T-cell (primary cell): ENCODE measurements at regions of chr1 and their contacts with region 1.

Region 1: GRCh38 chr1:110619412-110620249 is 13.5 kb upstream of the KCNA2 start:
- DNase-seq: peak; percentile 74 to 95 (median 86)
- ATAC-seq: peak; percentile 85 to 90 (median 86)
- H3K4me3 ChIP-seq: peak overlapping the region; percentile 67 to 73
- H3K4me3 Mint-ChIP-seq: peak overlapping the region; percentile 83 to 87 (median 86)
- H3K27ac ChIP-seq: peak overlapping the region; percentile 79
- H3K27ac Mint-ChIP-seq: peak overlapping the region; percentile 88 to 92
- H3K4me1 ChIP-seq: peaks cover 17 to 36% of the 10 kb centered on the region in 2 experiments
- H3K4me1 Mint-ChIP-seq: peaks cover 31 to 45% (median 41%) of the 10 kb centered on the region in 3 donors
- H3K27me3 ChIP-seq: no peaks in the 10 kb centered on the region
- H3K27me3 Mint-ChIP-seq: no peaks in the 10 kb centered on the region

Region 2: DNA sequence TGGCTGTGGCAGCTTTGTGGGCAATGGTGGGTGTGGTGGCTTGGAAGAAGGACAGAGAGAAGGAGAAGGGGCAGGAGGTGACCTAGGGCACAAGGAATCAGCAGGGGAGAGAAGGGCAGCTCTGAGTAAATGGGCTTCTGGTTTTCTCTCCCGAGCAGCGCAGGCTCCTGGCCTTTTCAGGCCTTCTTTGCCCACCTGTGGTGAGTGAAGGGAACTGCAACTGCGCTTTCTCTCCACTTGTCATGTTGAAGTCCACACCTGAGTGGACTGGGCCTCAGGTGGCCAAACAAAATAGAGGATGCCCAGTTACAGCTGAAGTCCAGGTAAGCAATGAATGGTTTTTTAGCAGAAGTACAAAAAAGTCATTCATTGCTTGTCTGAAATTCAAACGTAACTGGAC is 71.2 kb before region 1 on chr1:
- CTCF ChIA-PET with region 1: no interaction called
- POLR2A ChIA-PET with region 1: no interaction called
- DNase-seq: no peak
- ATAC-seq: no peak
- H3K4me3 ChIP-seq: no peak overlapping the region
- H3K4me3 Mint-ChIP-seq: no peak overlapping the region
- H3K27ac ChIP-seq: no peak overlapping the region
- H3K27ac Mint-ChIP-seq: no peak overlapping the region
- H3K4me1 ChIP-seq: no peaks in the 10 kb centered on the region
- H3K4me1 Mint-ChIP-seq: no peaks in the 10 kb centered on the region
- H3K27me3 ChIP-seq: peaks cover 0 to 18% of the 10 kb centered on the region in 2 experiments
- H3K27me3 Mint-ChIP-seq: peaks cover 32 to 45% of the 10 kb centered on the region in 2 donors

Region 3: DNA sequence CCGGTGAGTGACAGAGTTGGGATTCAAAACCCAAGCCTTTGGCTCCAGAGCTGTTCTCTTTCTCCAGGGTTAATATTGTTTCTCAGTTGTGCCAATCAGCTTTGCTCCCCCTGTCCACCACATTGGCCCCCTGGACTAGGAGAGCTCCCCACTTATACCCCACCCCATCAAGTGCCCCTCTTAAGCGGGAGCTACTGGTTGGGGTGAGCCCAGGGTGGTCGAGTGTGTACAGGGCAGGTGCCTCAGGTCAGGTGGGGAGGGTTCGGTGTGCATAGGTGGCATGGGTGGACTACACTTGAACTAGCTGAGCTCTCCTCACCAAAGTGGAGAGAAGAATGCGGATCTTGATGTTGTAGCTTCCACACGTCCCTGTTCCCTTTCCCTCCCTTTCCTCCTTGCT is 27.7 kb before region 1 on chr1:
- CTCF ChIA-PET with region 1: no interaction called
- POLR2A ChIA-PET with region 1: no interaction called
- DNase-seq: no peak
- ATAC-seq: no peak
- H3K4me3 ChIP-seq: no peak overlapping the region
- H3K4me3 Mint-ChIP-seq: no peak overlapping the region
- H3K27ac ChIP-seq: no peak overlapping the region
- H3K27ac Mint-ChIP-seq: no peak overlapping the region
- H3K4me1 ChIP-seq: no peaks in the 10 kb centered on the region
- H3K4me1 Mint-ChIP-seq: peaks cover 0 to 7% (median 4%) of the 10 kb centered on the region in 3 donors
- H3K27me3 ChIP-seq: peaks cover 3 to 25% of the 10 kb centered on the region in 2 experiments
- H3K27me3 Mint-ChIP-seq: peaks cover 12 to 18% of the 10 kb centered on the region in 2 donors

Region 4: GRCh38 chr1:110630839-110631663 is 11.4 kb after region 1 on chr1:
- CTCF ChIA-PET with region 1: interaction called, 6 to 11 read pairs
- POLR2A ChIA-PET with region 1: no interaction called
- DNase-seq: peak; percentile 63 to 93 (median 79)
- ATAC-seq: peak; percentile 78 to 84 (median 80)
- H3K4me3 ChIP-seq: peak overlapping the region; percentile 19 to 36
- H3K4me3 Mint-ChIP-seq: no peak overlapping the region
- H3K27ac ChIP-seq: peak overlapping the region; percentile 88
- H3K27ac Mint-ChIP-seq: no peak overlapping the region
- H3K4me1 ChIP-seq: peaks cover 38 to 66% of the 10 kb centered on the region in 2 experiments
- H3K4me1 Mint-ChIP-seq: peaks cover 42 to 62% (median 53%) of the 10 kb centered on the region in 3 donors
- H3K27me3 ChIP-seq: no peaks in the 10 kb centered on the region
- H3K27me3 Mint-ChIP-seq: no peaks in the 10 kb centered on the region

Region 5: DNA sequence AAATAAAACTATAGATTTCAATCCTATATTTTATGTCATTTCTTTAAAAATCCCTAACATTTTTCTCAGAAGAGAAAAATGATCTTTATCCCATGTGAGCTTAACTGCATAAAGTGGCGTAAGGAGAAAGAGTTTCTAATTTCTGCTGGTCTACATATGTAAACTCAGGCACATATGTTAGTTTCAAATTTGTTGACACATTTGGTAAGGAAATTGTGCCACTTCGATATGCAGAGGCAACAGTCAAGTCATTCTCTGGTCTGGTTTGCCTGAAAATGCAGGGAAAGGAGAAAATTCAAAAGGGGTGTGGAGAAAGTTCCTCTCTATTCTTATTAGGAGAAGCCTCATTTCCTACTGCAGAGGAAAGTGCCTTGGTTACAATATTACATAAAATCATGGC is 43.6 kb after region 1 on chr1:
- CTCF ChIA-PET with region 1: interaction called in 1 of 2 experiments, 13 read pairs
- POLR2A ChIA-PET with region 1: no interaction called
- DNase-seq: no peak
- ATAC-seq: no peak
- H3K4me3 ChIP-seq: no peak overlapping the region
- H3K4me3 Mint-ChIP-seq: no peak overlapping the region
- H3K27ac ChIP-seq: no peak overlapping the region
- H3K27ac Mint-ChIP-seq: peak overlapping the region; percentile 32 to 50
- H3K4me1 ChIP-seq: peaks cover 7 to 14% of the 10 kb centered on the region in 2 experiments
- H3K4me1 Mint-ChIP-seq: peaks cover 6 to 34% (median 32%) of the 10 kb centered on the region in 3 donors
- H3K27me3 ChIP-seq: no peaks in the 10 kb centered on the region
- H3K27me3 Mint-ChIP-seq: no peaks in the 10 kb centered on the region

Region 6: GRCh38 chr1:110674337-110675059 is 54.9 kb after region 1 on chr1 and contains the start of gene KCNA3:
- CTCF ChIA-PET with region 1: interaction called, 7 to 12 read pairs
- POLR2A ChIA-PET with region 1: no interaction called
- DNase-seq: peak; percentile 35 to 79 (median 58)
- ATAC-seq: peak; percentile 35 to 59 (median 54)
- H3K4me3 ChIP-seq: peak within 1 kb of the TSS; percentile 78 to 99
- H3K4me3 Mint-ChIP-seq: peak within 1 kb of the TSS; percentile 93 to 100 (median 96)
- H3K27ac ChIP-seq: peak within 1 kb of the TSS; percentile 96
- H3K27ac Mint-ChIP-seq: peak within 1 kb of the TSS; percentile 94 to 100
- H3K4me1 ChIP-seq: peaks cover 6 to 28% of the 10 kb centered on the region in 2 experiments
- H3K4me1 Mint-ChIP-seq: peaks cover 37 to 61% (median 54%) of the 10 kb centered on the region in 3 donors
- H3K27me3 ChIP-seq: no peaks in the 10 kb centered on the region
- H3K27me3 Mint-ChIP-seq: no peaks in the 10 kb centered on the region
- total RNA-seq, gene KCNA3: 101 to 125 (median 110) TPM

Region 7: DNA sequence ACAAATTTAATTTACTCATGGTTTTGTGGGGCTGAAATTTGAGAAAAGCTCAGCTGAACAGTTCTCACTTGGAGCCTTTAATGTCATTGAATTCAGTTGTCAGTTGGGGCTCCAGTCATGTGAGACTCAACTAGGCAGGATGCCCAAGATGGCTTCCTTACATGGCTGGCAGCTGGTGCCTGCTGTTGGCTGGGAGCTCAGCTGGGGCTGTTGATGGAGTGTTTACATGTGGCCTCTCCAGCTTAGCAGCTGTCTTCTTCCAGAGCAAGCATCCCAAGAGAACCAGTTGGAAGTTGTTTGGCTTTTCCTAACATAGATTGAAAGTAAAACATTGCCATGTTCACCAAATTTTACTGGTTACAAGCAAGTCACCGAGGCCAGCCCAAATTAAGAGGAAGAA is 136.9 kb after region 1 on chr1:
- CTCF ChIA-PET with region 1: interaction called, 3 to 10 read pairs
- POLR2A ChIA-PET with region 1: no interaction called
- DNase-seq: no peak
- ATAC-seq: no peak
- H3K4me3 ChIP-seq: no peak overlapping the region
- H3K4me3 Mint-ChIP-seq: no peak overlapping the region
- H3K27ac ChIP-seq: no peak overlapping the region
- H3K27ac Mint-ChIP-seq: no peak overlapping the region
- H3K4me1 ChIP-seq: no peaks in the 10 kb centered on the region
- H3K4me1 Mint-ChIP-seq: no peaks in the 10 kb centered on the region
- H3K27me3 ChIP-seq: peaks cover 2 to 3% of the 10 kb centered on the region in 2 experiments
- H3K27me3 Mint-ChIP-seq: peaks cover 20 to 24% of the 10 kb centered on the region in 2 donors

Region 8: GRCh38 chr1:110780600-110781484 is 161.2 kb after region 1 on chr1:
- CTCF ChIA-PET with region 1: interaction called, 10 to 75 read pairs
- POLR2A ChIA-PET with region 1: no interaction called
- DNase-seq: peak; percentile 47 to 91 (median 67)
- ATAC-seq: peak; percentile 60 to 82 (median 67)
- H3K4me3 ChIP-seq: no peak overlapping the region
- H3K4me3 Mint-ChIP-seq: no peak overlapping the region
- H3K27ac ChIP-seq: no peak overlapping the region
- H3K27ac Mint-ChIP-seq: no peak overlapping the region
- H3K4me1 ChIP-seq: peaks cover 11 to 38% of the 10 kb centered on the region in 2 experiments
- H3K4me1 Mint-ChIP-seq: peaks cover 41 to 53% (median 41%) of the 10 kb centered on the region in 3 donors
- H3K27me3 ChIP-seq: peaks cover 0 to 7% of the 10 kb centered on the region in 2 experiments
- H3K27me3 Mint-ChIP-seq: peaks cover 6 to 9% of the 10 kb centered on the region in 2 donors